ENCODE measurements at regions of chr18 and their contacts with region 1.

Region 1: GRCh38 chr18:47150029-47150823 is at the start of gene HDHD2:
- DNase-seq: peak; percentile 88
- ATAC-seq: peak; percentile 89
- H3K4me3 Mint-ChIP-seq: peak within 1 kb of the TSS; percentile 98
- H3K27ac Mint-ChIP-seq: peak within 1 kb of the TSS; percentile 98
- H3K4me1 Mint-ChIP-seq: peaks cover 41% of the 10 kb centered on the region
- H3K27me3 Mint-ChIP-seq: no peaks in the 10 kb centered on the region
- total RNA-seq, gene HDHD2: 27.7 to 28.9 TPM

Region 2: DNA sequence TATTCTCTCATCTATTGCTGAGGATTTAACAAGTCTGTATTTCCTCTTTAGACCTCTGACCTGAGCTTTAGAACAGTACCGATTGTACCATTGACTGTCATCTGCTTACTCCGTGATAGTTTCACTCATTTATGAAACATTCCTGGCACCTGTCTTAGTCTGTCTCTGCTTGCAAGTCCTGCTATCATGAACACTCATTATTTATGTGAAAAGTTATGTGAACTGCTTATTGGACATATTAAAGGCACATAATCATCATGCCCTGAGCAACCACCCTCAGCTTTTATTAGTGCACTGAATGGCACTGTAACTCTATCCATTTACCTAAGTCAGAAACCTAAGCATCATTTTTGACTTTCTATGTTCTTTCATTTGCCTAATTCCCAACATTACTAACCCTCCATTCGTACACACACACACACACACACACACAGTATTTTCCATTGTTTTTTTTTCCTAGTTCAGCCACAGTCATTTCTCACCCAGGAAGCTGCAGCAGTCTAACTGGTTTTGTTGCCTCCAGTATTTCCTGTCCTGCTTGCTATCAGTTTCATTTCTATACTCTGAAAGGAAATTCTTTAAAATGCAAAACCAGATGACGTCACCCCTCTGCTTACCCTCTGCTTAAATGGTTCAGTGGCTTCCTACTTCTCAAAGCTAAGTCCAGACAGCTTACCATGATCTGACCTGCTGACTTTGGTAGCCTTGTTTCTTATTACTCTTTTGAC is 900.0 kb before region 1 on chr18:
- CTCF ChIA-PET with region 1: no interaction called
- POLR2A ChIA-PET with region 1: no interaction called
- intact Hi-C with region 1: loop called in 1 of 2 experiments (anchors 10 kb)
- DNase-seq: peak; percentile 61
- ATAC-seq: peak; percentile 90
- H3K4me3 Mint-ChIP-seq: peak overlapping the region; percentile 62
- H3K27ac Mint-ChIP-seq: peak overlapping the region; percentile 97
- H3K4me1 Mint-ChIP-seq: peaks cover 64% of the 10 kb centered on the region
- H3K27me3 Mint-ChIP-seq: no peaks in the 10 kb centered on the region

Region 3: GRCh38 chr18:47120428-47120827 is 29.8 kb before region 1 on chr18:
- CTCF ChIA-PET with region 1: interaction called, 4 read pairs
- POLR2A ChIA-PET with region 1: interaction called, 4 read pairs
- intact Hi-C with region 1: loop called in 1 of 2 experiments (anchors 1 kb)
- DNase-seq: peak; percentile 32
- ATAC-seq: peak; percentile 95
- H3K4me3 Mint-ChIP-seq: no peak overlapping the region
- H3K27ac Mint-ChIP-seq: peak overlapping the region; percentile 33
- H3K4me1 Mint-ChIP-seq: peaks cover 36% of the 10 kb centered on the region
- H3K27me3 Mint-ChIP-seq: no peaks in the 10 kb centered on the region

Region 4: DNA sequence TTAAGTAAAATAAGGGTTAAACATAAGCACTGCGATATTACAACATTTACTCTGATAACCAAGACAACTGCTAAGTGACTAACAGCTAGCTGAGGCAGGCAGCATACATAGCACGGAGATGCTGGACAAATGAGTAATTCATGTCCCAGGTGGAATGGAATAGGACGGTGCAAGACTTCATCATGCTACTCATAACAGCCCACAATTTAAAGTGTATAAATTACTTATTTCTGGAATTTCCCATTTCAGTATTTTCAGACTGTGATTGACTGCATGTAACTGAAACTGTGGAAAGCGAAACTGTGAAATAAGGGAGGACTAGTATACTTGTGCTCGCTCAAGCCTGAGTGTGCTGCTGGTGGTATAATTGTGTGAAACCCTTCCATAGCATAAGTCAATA is 13.0 kb after region 1 on chr18:
- CTCF ChIA-PET with region 1: interaction called, 3 read pairs
- POLR2A ChIA-PET with region 1: interaction called, 4 read pairs
- intact Hi-C with region 1: loop called in 1 of 2 experiments (anchors 1 kb)
- DNase-seq: peak; percentile 17
- ATAC-seq: peak; percentile 95
- H3K4me3 Mint-ChIP-seq: no peak overlapping the region
- H3K27ac Mint-ChIP-seq: no peak overlapping the region
- H3K4me1 Mint-ChIP-seq: peaks cover 34% of the 10 kb centered on the region
- H3K27me3 Mint-ChIP-seq: no peaks in the 10 kb centered on the region

Region 5: GRCh38 chr18:47175908-47176575 is 25.8 kb after region 1 on chr18 and contains the start of gene IER3IP1:
- CTCF ChIA-PET with region 1: interaction called, 4 read pairs
- POLR2A ChIA-PET with region 1: no interaction called
- intact Hi-C with region 1: loop called (anchors 1 to 2 kb)
- DNase-seq: peak; percentile 93
- ATAC-seq: peak; percentile 92
- H3K4me3 Mint-ChIP-seq: no peak within 1 kb of the TSS
- H3K27ac Mint-ChIP-seq: peak within 1 kb of the TSS; percentile 40
- H3K4me1 Mint-ChIP-seq: peaks cover 2% of the 10 kb centered on the region
- H3K27me3 Mint-ChIP-seq: no peaks in the 10 kb centered on the region
- total RNA-seq, gene IER3IP1: 9.0 to 11.5 TPM